PC-3 (cell line): ENCODE measurements at regions of chr18 and their contacts with region 1.

Region 1: DNA sequence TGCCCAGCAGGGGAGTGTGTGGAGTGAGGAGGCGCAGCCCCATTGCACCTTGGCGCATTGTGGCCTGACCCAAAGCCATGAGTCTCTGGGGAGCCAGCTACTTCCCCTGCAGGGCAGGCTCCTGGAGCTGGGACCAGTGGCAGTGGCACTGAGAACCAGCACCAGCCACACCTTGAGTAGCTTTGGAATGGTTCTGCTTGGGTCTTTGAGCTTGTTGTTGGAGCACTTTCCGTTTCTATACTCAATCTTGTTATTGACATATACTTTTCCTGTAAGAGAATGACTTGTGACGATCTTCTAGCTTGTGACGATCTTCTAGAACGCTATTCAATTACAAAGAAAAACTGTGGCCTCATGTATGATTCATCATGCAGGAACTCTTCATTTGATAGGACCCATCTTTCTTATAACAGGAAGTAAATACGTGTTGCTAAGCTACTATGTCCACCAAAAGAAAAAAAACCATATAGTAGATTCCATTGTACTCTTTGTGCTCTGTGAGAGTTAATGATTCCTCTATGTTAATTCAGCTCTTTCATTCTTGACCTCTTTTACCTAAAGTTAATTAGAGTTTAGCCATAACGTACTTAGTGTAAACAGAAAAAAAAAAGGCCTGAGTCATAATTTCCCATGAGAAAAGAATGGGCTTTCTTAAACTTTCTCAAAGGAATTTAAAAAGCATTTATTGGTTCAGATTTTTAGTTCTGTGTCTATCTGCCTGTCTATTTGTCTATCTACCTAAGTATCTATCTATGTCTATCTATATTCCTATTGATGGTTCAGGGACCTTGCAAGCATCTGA is 113.1 kb downstream of the GATA6 start:
- DNase-seq: peak; percentile 89
- ATAC-seq: peak; percentile 68
- H3K4me3 ChIP-seq: peak overlapping the region; percentile 19; the same call in 1 of the 2 replicates
- H3K27ac ChIP-seq: peak overlapping the region; percentile 83
- H3K4me1 ChIP-seq: peaks cover 46% of the 10 kb centered on the region
- H3K27me3 ChIP-seq: no peaks in the 10 kb centered on the region
- CTCF ChIP-seq: no peak

Region 2: GRCh38 chr18:22032392-22032961 is 250.0 kb before region 1 on chr18:
- CTCF ChIA-PET with region 1: no interaction called
- POLR2A ChIA-PET with region 1: no interaction called
- intact Hi-C with region 1: loop called (anchors 2 kb)
- DNase-seq: peak; percentile 97
- ATAC-seq: peak; percentile 99
- H3K4me3 ChIP-seq: peak overlapping the region; percentile 43
- H3K27ac ChIP-seq: peak overlapping the region; percentile 86
- H3K4me1 ChIP-seq: peaks cover 17% of the 10 kb centered on the region
- H3K27me3 ChIP-seq: no peaks in the 10 kb centered on the region
- CTCF ChIP-seq: no peak

Region 3: GRCh38 chr18:22163416-22164161 is 118.9 kb before region 1 on chr18:
- CTCF ChIA-PET with region 1: no interaction called
- POLR2A ChIA-PET with region 1: no interaction called
- intact Hi-C with region 1: no loop called
- DNase-seq: no peak
- ATAC-seq: no peak
- H3K4me3 ChIP-seq: no peak overlapping the region
- H3K27ac ChIP-seq: no peak overlapping the region
- H3K4me1 ChIP-seq: no peaks in the 10 kb centered on the region
- H3K27me3 ChIP-seq: peaks cover 6% of the 10 kb centered on the region
- CTCF ChIP-seq: no peak

Region 4: DNA sequence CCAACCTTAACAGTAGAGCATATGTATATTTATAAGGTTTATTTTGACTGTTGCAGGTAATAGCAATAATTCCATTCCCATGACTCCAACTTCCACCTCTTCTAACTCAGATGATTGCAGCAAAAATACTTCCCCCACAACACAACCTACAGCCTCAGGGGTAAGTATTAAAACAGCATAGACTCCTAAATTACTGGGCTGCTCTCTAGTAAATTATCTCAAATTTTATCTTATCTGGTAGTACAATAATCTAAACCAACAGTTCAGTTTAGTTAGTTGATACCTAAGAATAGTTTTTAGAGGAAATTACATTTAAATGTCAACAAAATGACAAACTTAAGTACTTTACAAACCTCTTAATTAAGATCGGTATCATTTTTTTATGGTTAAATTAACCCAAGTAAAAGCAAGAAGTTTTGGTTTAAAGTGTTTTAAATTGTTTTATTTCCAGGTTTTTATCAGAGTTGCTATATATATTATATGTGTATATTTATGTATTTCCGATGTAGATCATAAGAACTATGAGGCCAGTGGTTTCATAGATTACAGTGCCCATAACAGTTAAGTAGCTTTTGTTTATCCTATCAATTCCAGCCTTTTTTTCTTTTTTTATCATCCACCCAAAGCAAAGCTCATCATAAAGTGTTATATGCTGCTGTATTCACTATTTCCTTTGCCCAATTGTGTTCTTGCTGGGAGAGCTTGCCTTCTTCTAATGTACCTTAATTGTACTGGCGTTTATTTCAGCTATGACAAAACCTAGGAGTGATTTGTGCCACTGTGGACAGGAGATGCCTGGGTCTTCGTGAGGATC is 99.4 kb before region 1 on chr18:
- CTCF ChIA-PET with region 1: no interaction called
- POLR2A ChIA-PET with region 1: no interaction called
- intact Hi-C with region 1: loop called (anchors 5 kb)
- DNase-seq: peak; percentile 52
- ATAC-seq: peak; percentile 86
- H3K4me3 ChIP-seq: no peak overlapping the region
- H3K27ac ChIP-seq: no peak overlapping the region
- H3K4me1 ChIP-seq: peaks cover 6% of the 10 kb centered on the region; the same call in 1 of the 2 replicates
- H3K27me3 ChIP-seq: no peaks in the 10 kb centered on the region
- CTCF ChIP-seq: no peak

Region 5: GRCh38 chr18:22250591-22250996 is 31.9 kb before region 1 on chr18:
- CTCF ChIA-PET with region 1: no interaction called
- POLR2A ChIA-PET with region 1: interaction called, 4 read pairs
- intact Hi-C with region 1: loop called (anchors 2 kb)
- DNase-seq: peak; percentile 92
- ATAC-seq: peak; percentile 100
- H3K4me3 ChIP-seq: no peak overlapping the region
- H3K27ac ChIP-seq: peak overlapping the region; percentile 49
- H3K4me1 ChIP-seq: peaks cover 16% of the 10 kb centered on the region
- H3K27me3 ChIP-seq: no peaks in the 10 kb centered on the region
- CTCF ChIP-seq: no peak; the same call in 1 of the 2 replicates

Region 6: DNA sequence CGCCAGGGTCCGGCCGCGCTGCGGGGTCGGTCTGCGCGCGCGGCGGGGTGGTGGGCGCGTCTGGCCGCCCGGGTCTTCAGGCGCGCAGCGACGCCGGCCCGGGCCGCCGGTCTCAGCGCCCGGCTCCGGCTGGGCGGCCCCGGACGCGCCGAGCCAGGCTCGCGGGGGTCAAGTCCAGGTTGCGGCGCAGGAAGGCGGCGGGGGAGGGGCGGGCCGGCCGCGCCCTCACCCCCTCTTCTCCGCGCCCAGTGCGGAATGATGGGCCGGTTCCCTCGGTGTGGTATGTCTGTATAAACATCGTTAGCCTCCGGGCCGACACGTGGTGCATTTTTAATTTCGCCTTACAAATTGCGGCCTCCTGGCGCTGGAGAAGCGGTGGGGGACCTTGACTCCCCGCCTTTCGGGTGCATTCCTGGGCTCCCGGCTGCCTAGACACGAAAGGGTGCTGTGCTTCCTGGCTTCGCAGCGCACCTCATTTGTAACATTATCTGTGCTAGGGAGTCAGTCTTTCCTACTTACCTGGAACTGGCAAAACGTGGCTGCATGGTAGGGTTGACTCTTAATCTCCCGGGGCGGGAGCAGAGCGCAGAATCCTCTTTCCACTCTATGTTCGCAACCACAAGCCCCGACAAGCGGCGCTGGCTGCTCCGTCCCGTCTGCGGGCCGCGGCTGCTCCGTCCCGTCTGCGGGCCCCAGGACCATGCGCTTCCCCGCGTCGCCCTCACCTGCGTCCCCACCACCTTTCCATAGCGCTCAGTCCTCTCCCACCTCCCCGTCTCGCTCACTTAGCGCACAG is 66.2 kb after region 1 on chr18:
- CTCF ChIA-PET with region 1: interaction called, 3 read pairs
- POLR2A ChIA-PET with region 1: interaction called, 7 read pairs
- intact Hi-C with region 1: loop called (anchors 1 kb)
- DNase-seq: peak; percentile 77
- ATAC-seq: peak; percentile 70
- H3K4me3 ChIP-seq: peak overlapping the region; percentile 65
- H3K27ac ChIP-seq: peak overlapping the region; percentile 62
- H3K4me1 ChIP-seq: peaks cover 67% of the 10 kb centered on the region
- H3K27me3 ChIP-seq: no peaks in the 10 kb centered on the region
- CTCF ChIP-seq: no peak